Mammary epithelial cell (primary cell): ENCODE measurements at regions of chr9 and their contacts with region 1.

Region 1: GRCh38 chr9:129460323-129461261 is 160.3 kb downstream of the C9orf50 start:
- DNase-seq: peak; percentile 92
- H3K4me3 ChIP-seq: peak overlapping the region in 2 of 3 experiments; percentile 27 to 48
- H3K27ac ChIP-seq: peak overlapping the region; percentile 63
- H3K4me1 ChIP-seq: peaks cover 28% of the 10 kb centered on the region
- H3K27me3 ChIP-seq: no peaks in the 10 kb centered on the region
- CTCF ChIP-seq: peak in 1 of 2 donors; percentile 4

Region 2: GRCh38 chr9:129383019-129383560 is 77.5 kb before region 1 on chr9:
- CTCF ChIA-PET with region 1: no interaction called
- dilution Hi-C with region 1: no loop called
- in situ Hi-C with region 1: no loop called
- intact Hi-C with region 1: no loop called
- DNase-seq: peak; percentile 72
- H3K4me3 ChIP-seq: peak overlapping the region; percentile 27 to 58 (median 45)
- H3K27ac ChIP-seq: no peak overlapping the region
- H3K4me1 ChIP-seq: peaks cover 16% of the 10 kb centered on the region
- H3K27me3 ChIP-seq: no peaks in the 10 kb centered on the region
- CTCF ChIP-seq: no peak

Region 3: DNA sequence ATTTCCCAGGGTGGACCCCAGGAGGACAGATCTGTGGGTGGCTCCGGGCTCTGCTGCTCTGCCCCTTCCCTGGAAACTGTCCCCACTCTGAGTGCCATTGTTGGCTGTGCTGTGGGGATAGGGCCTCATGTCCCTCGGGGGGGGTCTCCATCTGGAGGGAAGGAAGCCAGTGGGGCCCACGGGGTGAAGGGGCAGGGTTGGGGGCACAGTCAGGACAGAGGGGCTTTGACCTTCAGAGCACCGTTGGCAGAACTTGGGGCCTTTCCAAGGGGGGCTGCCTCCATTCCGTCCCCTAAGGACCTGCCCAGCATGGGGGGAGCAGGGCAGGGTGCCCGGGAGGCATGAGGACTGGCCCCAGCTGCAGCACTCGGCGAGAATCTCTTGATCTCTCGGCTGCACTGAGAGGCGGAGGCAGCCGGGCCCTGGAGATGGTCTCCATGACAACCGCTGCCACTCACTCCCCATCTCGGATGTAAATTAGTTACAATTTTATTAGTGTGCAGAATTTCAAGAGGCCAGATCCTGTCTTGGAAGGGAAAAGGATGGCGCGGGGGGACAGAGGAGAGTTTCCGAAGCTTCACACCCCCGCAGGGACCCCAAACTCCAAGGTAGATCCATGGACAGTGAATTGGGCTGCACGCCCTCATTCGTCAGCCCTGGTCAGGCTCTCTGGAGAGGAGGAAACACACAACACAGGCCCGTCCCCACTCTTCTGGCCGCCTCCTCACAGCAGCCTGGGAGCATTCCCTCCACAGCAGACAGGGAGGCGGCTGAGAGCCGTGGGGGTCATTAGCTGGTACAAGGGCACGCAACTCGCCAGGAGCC is 66.3 kb before region 1 on chr9:
- CTCF ChIA-PET with region 1: no interaction called
- dilution Hi-C with region 1: loop called (anchors 5 kb)
- in situ Hi-C with region 1: no loop called
- intact Hi-C with region 1: no loop called
- DNase-seq: no peak
- H3K4me3 ChIP-seq: no peak overlapping the region
- H3K27ac ChIP-seq: no peak overlapping the region
- H3K4me1 ChIP-seq: no peaks in the 10 kb centered on the region
- H3K27me3 ChIP-seq: no peaks in the 10 kb centered on the region
- CTCF ChIP-seq: no peak

Region 4: DNA sequence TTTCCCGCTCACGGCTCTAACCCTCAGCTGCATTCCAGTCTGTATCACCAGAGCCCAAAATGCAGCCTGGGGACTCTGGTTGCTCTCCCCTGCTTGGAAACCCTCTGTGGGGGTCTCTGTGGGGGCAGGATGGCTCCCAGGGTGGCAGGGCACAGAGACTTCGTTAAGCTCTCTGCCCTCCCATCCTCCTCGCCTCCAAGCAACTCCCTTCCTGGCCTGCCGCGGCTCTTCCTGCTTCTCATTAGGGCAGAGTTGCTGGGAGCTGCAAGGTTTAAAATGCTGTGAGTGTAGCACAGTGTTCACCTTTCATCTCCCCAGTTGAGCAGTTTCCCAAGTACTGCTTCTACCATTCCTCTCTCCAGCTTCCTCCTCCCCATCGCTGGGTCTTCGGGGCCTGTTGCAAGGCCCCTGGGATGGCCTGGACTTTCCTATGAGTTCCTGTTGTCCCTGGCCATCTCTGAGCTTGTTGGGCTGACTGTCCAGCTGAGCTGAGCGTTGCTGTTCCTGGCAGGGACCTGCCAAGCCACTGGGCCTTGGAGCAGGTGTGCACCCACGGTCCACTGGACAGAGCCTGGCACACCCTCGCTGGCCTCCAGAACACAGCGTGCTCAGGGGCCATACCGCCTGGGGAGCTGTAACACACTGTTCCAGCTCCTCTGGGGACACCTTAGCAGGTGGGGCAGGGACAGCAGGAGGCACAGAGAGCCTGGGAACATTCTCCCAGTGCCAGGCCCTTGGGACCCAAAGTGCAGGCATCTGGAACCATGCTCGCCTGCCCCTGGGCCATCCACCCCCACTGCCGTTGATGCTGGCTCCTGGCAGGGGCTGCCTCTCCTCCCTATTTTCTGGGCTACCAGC is 28.1 kb before region 1 on chr9:
- CTCF ChIA-PET with region 1: no interaction called
- dilution Hi-C with region 1: loop called (anchors 5 kb)
- in situ Hi-C with region 1: no loop called
- intact Hi-C with region 1: no loop called
- DNase-seq: no peak
- H3K4me3 ChIP-seq: no peak overlapping the region
- H3K27ac ChIP-seq: no peak overlapping the region
- H3K4me1 ChIP-seq: peaks cover 3% of the 10 kb centered on the region
- H3K27me3 ChIP-seq: peaks cover 11% of the 10 kb centered on the region
- CTCF ChIP-seq: no peak

Region 5: DNA sequence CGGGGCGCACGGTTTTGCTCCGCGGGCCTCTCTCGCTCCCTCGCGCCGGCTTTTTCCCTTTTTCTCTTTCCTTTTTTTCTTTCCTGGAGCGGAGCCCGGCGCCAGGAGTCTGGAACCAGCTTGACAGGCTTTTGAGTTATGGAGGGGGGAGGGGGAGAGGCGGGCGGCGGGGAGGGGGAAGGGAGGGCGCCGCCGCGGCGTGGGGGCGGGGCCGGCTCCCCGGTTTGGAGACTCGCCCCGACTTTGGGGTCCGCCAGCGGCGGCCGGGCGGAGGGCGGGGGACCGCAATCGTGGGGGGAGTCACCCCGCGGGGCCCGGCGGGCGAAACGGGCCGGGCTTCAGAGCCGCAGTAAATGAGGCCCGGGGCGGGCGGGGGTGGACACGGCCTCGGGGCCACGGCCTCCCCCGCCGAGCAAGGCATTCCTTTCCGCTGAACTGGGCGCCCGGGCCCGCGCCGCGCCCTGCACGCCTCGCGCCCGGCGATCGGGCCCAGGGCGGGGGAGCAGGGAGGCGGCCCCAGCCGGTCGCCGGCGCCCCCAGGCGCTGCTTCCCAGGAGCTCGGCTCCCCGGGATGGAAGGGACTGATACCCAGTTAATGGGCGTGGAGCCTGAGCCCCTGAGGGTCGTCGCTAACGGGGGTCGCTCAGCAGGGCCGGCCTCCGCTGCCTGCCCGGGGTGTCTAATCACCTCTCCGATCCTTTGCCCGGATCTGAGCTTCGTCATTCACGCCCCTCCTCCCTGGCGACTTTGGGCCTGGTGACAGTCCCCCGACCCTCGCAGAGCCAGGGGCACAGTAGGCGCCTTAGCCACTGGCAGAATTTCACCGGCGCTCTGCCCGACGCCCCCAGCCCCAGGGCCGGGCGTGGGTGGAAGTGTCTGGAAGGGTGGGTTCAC is 22.2 kb after region 1 on chr9:
- CTCF ChIA-PET with region 1: no interaction called
- dilution Hi-C with region 1: no loop called
- in situ Hi-C with region 1: no loop called
- intact Hi-C with region 1: loop called (anchors 2 kb)
- DNase-seq: peak; percentile 80
- H3K4me3 ChIP-seq: peak overlapping the region; percentile 29 to 46 (median 32)
- H3K27ac ChIP-seq: peak overlapping the region; percentile 95
- H3K4me1 ChIP-seq: peaks cover 43% of the 10 kb centered on the region
- H3K27me3 ChIP-seq: no peaks in the 10 kb centered on the region
- CTCF ChIP-seq: no peak

Region 6: GRCh38 chr9:129495534-129496325 is 35.1 kb after region 1 on chr9:
- CTCF ChIA-PET with region 1: interaction called, 9 read pairs
- dilution Hi-C with region 1: no loop called
- in situ Hi-C with region 1: no loop called
- intact Hi-C with region 1: loop called (anchors 5 kb)
- DNase-seq: peak; percentile 63
- H3K4me3 ChIP-seq: peak overlapping the region; percentile 51 to 61 (median 51)
- H3K27ac ChIP-seq: peak overlapping the region; percentile 45
- H3K4me1 ChIP-seq: peaks cover 16% of the 10 kb centered on the region
- H3K27me3 ChIP-seq: no peaks in the 10 kb centered on the region
- CTCF ChIP-seq: no peak

Region 7: GRCh38 chr9:129524582-129525270 is 64.1 kb after region 1 on chr9:
- CTCF ChIA-PET with region 1: no interaction called
- dilution Hi-C with region 1: loop called (anchors 5 kb)
- in situ Hi-C with region 1: no loop called
- intact Hi-C with region 1: no loop called
- DNase-seq: no peak
- H3K4me3 ChIP-seq: no peak overlapping the region
- H3K27ac ChIP-seq: no peak overlapping the region
- H3K4me1 ChIP-seq: peaks cover 3% of the 10 kb centered on the region
- H3K27me3 ChIP-seq: no peaks in the 10 kb centered on the region
- CTCF ChIP-seq: no peak